Activated CD8-positive, alpha-beta memory T cell treated with anti-CD3 and anti-CD28 coated beads, Interleukin-2, amount 10 ng/mL, durations not matched to agents 7 days and 5 days (primary cell): ENCODE measurements at regions of chr19 and their contacts with region 1.

Region 1: GRCh38 chr19:1455336-1456120 is 5.6 kb downstream of the APC2 start:
- DNase-seq: peak; percentile 74
- ATAC-seq: peak; percentile 75
- H3K4me3 Mint-ChIP-seq: no peak overlapping the region
- H3K27ac Mint-ChIP-seq: no peak overlapping the region
- H3K4me1 Mint-ChIP-seq: peaks cover 11% of the 10 kb centered on the region
- H3K27me3 Mint-ChIP-seq: peaks cover 48% of the 10 kb centered on the region

Region 2: DNA sequence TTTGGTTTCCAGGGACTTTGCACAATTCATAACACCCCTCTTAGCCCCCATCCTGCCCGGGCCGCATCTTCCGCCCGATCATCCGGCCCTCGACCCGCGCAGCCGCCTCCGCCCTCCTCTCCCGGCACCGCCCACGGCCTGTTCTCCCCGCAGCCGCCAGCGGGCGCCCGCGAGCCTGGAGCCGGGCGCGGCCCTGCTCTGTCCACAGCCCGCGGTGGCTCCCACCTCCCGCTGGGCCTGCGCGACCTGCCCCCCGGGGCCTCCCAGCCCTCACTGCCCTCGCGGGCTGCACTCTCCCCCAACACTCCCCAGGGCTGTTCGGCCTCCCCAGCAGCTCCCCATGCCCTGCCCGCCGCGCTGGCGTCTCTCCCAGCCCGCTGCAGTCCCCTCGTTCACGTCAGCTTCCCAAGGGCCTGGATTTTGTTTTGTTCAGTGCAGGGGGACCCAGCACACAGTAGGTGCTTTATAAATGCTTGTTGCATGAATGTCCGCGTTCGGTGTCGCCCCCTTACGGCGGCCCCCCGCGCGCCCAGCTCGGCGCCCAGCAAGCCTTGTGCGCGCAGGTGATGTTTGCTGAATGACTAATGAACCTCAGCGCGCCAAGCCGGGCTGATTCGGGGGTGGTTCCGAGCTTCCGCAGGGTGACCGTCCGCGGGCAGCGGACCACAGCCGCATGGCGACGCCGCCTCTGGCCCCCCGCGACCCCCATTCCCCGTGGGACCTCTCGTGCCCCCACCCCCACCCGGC is 10.2 kb before region 1 on chr19:
- CTCF ChIA-PET with region 1: interaction called, 11 read pairs
- DNase-seq: peak; percentile 86
- ATAC-seq: peak; percentile 90
- H3K4me3 Mint-ChIP-seq: peak overlapping the region; percentile 72
- H3K27ac Mint-ChIP-seq: peak overlapping the region; percentile 75
- H3K4me1 Mint-ChIP-seq: peaks cover 30% of the 10 kb centered on the region
- H3K27me3 Mint-ChIP-seq: peaks cover 32% of the 10 kb centered on the region

Region 3: GRCh38 chr19:1521636-1522035 is 66.1 kb after region 1 on chr19:
- CTCF ChIA-PET with region 1: no interaction called
- DNase-seq: no peak
- ATAC-seq: no peak
- H3K4me3 Mint-ChIP-seq: no peak overlapping the region
- H3K27ac Mint-ChIP-seq: no peak overlapping the region
- H3K4me1 Mint-ChIP-seq: peaks cover 4% of the 10 kb centered on the region
- H3K27me3 Mint-ChIP-seq: peaks cover 24% of the 10 kb centered on the region

Region 4: GRCh38 chr19:1577090-1577928 is 121.8 kb after region 1 on chr19:
- CTCF ChIA-PET with region 1: no interaction called
- DNase-seq: no peak
- ATAC-seq: no peak
- H3K4me3 Mint-ChIP-seq: no peak overlapping the region
- H3K27ac Mint-ChIP-seq: no peak overlapping the region
- H3K4me1 Mint-ChIP-seq: peaks cover 1% of the 10 kb centered on the region
- H3K27me3 Mint-ChIP-seq: no peaks in the 10 kb centered on the region